ENCODE measurements at regions of chr10 and their contacts with region 1.

Region 1: DNA sequence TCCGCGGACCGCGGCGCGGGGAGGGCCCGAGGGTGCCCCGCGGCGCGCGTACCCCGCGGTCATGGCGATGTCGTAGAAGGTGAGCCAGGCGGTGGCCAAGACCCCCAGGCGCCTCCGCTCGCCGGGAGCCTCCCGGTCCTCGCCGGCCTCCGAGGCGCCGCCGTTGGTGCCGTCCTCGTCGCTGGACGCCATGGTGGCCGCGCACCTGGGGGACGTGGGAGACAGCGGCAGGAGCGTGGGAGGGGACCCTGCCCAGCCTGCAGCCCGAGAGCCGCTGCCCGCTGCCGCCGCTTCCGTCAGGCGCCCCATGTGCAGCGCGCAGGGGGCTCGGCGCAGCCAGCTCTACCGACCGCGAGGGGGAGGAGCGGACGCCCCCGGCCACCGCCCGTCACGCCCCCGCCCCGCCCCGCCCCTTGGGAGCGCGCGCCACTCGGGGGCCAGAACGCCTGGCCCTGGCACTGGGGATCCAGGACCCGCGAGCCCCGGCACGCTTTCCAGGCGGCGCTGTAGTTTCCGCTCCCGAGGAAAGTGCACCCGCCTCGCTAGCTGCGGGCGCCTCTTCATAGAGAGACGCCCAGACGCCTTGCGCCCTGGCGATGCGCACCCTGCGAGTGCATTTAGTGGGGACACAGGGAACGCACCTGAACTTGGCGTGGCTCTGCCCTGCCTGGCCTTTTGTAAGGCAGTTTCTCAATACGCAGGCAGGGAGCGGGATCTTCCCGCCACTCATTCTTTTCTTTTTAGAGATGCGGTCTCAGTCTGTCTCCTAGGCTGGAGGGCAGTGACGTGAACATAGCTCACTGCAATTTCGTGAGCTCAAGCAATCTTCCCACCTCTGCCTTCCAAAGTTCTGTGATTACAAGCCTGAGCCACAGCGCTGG is at the start of gene HACD1:
- DNase-seq: peak; percentile 85
- total RNA-seq, gene HACD1: 213 TPM

Region 2: DNA sequence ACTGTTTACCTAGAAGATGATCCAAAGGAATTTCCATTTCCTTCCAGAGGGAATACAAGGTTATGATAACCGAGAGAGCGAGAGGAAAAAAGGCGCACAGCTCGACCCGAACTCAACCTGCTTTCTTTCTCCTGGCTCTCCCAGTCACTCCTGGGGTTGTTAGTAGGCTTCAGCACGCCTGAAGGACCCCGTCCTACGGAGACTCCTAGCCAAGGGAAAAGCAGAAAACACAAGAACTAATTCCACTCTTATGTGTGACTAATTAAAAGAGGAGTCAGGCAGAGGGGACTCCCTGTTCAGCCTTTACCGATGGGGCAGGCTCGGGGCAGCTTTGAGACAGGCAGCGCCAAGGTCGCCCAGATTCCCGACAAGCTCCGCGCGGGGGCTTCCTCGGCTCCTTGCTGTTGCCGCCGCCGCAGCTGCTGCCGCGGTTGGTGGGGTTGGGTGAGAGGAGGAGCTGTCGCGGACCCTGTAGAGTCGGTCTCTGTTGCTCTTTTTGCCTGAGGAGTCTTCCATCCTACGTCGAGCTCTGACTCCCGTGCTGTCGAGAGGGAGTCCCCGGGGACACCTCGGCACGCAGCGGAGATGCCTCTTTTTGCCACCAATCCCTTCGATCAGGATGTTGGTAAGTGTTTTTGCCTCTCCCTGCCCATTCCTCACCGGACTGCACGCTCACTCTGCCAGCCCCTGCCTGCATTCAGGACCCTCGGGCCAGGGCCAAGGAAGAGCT is 26.6 kb after region 1 on chr10 and contains the start of gene STAM:
- intact Hi-C with region 1: loop called (anchors 1 kb)
- DNase-seq: peak; percentile 96
- total RNA-seq, gene STAM: 40.8 TPM

Region 3: DNA sequence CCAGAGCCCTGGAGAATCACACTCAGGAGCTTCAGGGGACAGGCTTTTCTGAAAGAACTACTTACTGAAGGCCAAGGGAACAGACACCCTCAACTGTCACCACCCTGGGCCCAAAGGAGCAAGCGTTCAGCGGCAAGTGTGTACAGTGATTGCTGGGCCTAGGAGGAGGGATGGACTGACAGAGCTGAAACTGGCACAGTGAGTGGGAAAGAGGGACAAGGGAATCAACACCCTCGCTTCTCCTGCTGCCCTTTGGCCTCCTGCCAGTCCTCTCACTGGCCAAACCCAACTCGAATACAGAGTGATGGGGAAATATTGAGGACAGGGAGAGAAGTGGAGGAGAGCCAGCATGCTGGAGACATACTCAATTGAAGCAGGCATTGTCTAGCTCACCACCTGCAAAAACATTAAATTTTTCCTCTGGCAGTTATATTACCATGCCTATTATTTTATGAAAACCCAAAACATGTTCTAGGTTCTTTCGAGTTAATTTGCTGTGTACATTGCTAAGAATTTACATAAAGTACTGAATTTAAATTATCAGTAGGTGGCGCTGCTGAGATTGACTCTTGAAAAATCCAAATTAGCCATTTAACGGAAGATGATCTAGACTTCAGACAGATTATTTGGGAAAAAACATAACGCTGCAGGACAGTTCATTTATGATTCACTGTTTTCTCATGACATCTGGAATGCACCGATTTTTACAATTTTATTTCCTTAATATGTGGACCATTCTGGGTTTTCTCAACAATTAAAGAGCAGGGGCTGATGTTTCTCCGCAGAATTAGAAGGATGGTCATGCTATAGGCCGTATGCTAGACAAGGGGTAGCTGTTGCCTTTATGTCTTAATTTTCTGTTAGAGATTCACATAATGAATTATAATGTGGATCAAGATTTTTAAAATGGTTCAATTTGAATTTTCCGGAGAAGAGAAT is 120.0 kb after region 1 on chr10:
- intact Hi-C with region 1: loop called (anchors 2 kb)
- DNase-seq: no peak